ENCODE measurements at regions of chr15 and their contacts with region 1.

Region 1: GRCh38 chr15:80695104-80695910 is at the start of gene ABHD17C:
- DNase-seq: peak; percentile 43 to 73
- H3K4me3 ChIP-seq: peak within 1 kb of the TSS; percentile 86
- H3K4me3 Mint-ChIP-seq: peak within 1 kb of the TSS; percentile 86
- H3K27ac Mint-ChIP-seq: peak within 1 kb of the TSS; percentile 63
- H3K4me1 ChIP-seq: peaks cover 15% of the 10 kb centered on the region
- H3K4me1 Mint-ChIP-seq: peaks cover 23% of the 10 kb centered on the region
- H3K27me3 ChIP-seq: no peaks in the 10 kb centered on the region
- H3K27me3 Mint-ChIP-seq: no peaks in the 10 kb centered on the region
- CTCF ChIP-seq: no peak
- total RNA-seq, gene ABHD17C: 19.2 and 25.0 TPM in 2 replicates

Region 2: GRCh38 chr15:80645494-80646065 is 49.7 kb before region 1 on chr15:
- CTCF ChIA-PET with region 1: no interaction called
- POLR2A ChIA-PET with region 1: no interaction called
- intact Hi-C with region 1: no loop called
- DNase-seq: no peak
- H3K4me3 ChIP-seq: no peak overlapping the region
- H3K4me3 Mint-ChIP-seq: no peak overlapping the region
- H3K27ac Mint-ChIP-seq: no peak overlapping the region
- H3K4me1 ChIP-seq: no peaks in the 10 kb centered on the region
- H3K4me1 Mint-ChIP-seq: no peaks in the 10 kb centered on the region
- H3K27me3 ChIP-seq: no peaks in the 10 kb centered on the region
- H3K27me3 Mint-ChIP-seq: no peaks in the 10 kb centered on the region
- CTCF ChIP-seq: no peak

Region 3: DNA sequence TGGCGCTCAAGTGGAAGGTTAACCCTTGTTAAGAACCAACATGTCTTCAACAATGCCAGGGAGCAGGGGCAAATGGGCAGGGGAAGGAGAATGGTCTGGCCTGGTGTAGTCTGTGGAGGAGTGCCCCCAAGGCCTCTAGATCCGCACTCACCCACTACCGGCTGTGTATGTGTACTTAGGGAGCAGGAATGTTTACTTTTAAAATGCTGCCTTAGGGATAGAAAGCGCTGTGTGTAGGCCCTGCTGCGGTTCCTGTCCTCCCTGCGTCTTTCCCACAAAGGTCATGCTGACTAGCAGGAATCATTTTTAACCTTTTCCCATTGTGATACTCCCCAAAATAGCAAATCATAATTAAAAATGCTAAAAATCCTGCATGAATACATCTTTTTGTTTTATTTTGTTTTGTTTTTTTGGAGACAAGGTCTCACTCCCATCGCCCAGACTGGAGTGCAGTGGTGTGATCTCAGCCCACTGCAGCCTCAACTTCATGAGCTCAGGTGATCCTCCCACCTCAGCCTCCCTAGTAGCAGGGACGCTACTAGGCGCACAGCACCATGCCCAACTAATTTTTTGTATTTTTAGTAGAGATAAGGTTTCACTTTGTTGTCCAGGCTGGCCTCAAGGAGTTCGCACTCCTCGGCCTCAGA is 48.0 kb after region 1 on chr15:
- CTCF ChIA-PET with region 1: no interaction called
- POLR2A ChIA-PET with region 1: no interaction called
- intact Hi-C with region 1: loop called (anchors 5 kb)
- DNase-seq: peak; percentile 42 to 54
- H3K4me3 ChIP-seq: no peak overlapping the region
- H3K4me3 Mint-ChIP-seq: no peak overlapping the region
- H3K27ac Mint-ChIP-seq: peak overlapping the region; percentile 15
- H3K4me1 ChIP-seq: peaks cover 15% of the 10 kb centered on the region
- H3K4me1 Mint-ChIP-seq: peaks cover 25% of the 10 kb centered on the region
- H3K27me3 ChIP-seq: no peaks in the 10 kb centered on the region
- H3K27me3 Mint-ChIP-seq: no peaks in the 10 kb centered on the region
- CTCF ChIP-seq: no peak

Region 4: DNA sequence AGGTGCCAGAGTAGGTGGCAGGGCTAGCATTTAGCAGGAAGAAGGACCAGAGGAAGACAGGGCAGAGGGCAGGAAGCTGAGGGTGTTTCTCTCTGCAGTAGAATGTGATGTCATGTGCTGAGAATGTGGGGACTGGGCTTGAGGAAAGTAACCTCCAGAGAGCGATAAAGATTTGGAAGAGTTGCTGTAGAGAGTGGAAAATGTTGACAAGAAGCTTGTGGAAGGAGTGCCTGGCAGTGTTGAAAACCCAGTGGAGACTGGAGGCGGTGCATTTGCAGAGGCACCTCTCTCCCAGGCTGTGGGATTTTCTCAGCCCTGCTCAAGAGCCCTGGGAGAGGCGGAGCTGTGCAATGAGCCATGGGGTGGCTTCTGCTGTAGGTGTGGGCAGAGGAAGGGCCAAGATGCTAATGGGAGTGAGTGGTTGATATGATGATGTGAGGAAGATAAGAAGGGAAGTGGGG is 239.5 kb after region 1 on chr15:
- CTCF ChIA-PET with region 1: no interaction called
- POLR2A ChIA-PET with region 1: no interaction called
- intact Hi-C with region 1: no loop called
- DNase-seq: no peak
- H3K4me3 ChIP-seq: no peak overlapping the region
- H3K4me3 Mint-ChIP-seq: no peak overlapping the region
- H3K27ac Mint-ChIP-seq: no peak overlapping the region
- H3K4me1 ChIP-seq: 0 out of 2 replicates have a peak, but pooled peaks cover 3% of the 10 kb centered on the region
- H3K4me1 Mint-ChIP-seq: peaks cover 5% of the 10 kb centered on the region
- H3K27me3 ChIP-seq: no peaks in the 10 kb centered on the region
- H3K27me3 Mint-ChIP-seq: no peaks in the 10 kb centered on the region
- CTCF ChIP-seq: no peak

Region 5: GRCh38 chr15:81049835-81050234 is 354.5 kb after region 1 on chr15:
- CTCF ChIA-PET with region 1: no interaction called
- POLR2A ChIA-PET with region 1: no interaction called
- intact Hi-C with region 1: no loop called
- DNase-seq: no peak
- H3K4me3 ChIP-seq: no peak overlapping the region
- H3K4me3 Mint-ChIP-seq: no peak overlapping the region
- H3K27ac Mint-ChIP-seq: no peak overlapping the region
- H3K4me1 ChIP-seq: no peaks in the 10 kb centered on the region
- H3K4me1 Mint-ChIP-seq: no peaks in the 10 kb centered on the region
- H3K27me3 ChIP-seq: no peaks in the 10 kb centered on the region; the same call in 1 of the 2 replicates
- H3K27me3 Mint-ChIP-seq: peaks cover 20% of the 10 kb centered on the region
- CTCF ChIP-seq: no peak

Measured in Caco-2 (cell line).